Heart left ventricle (tissue), 16 donors: ENCODE measurements at regions of chr10 and their contacts with region 1.

Region 1: DNA sequence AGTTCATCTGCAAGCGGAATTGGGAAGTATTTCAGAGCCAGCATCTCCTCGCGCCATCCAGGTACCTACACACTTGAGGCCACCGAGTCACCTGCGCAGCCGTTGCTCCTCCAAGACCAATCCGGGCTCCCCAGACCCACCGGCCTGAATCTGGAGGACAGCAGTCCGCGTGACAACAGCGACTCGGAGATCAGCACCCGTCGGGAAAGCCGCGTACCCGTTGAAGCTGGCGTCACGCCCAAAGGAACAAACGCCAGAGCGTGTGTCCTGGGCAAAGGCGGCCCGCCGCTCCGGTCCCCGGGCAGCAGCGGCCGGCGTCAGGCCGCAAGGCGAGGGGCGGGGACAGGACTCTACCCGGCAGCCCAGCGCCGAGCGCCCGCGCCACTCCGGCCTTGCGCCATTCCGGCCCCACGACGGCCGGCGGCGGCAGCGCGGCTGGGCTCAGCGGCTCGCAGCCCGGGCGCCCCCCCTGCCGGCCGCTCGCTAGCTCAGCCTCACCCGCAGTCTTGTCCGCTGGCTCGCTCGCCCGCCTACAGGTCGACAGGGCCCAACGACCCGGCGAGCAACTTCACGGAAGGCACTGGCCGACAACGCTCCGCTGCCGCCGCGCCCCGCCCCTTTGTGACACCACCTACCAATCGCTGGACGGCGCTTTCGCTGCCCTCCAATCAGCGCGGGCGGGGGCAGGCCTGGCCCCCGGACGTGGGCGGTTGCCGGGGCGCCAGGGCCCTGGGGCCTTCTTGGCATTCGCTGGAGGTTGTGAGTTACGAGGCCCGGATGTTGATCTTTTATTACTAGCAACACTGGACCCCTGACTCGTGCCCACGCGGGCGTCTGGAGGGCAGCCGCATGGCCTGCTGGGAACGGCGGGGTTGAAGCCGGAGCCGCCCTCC is at the start of gene ZFAND4:
- DNase-seq: peak; percentile 98 to 99 (median 99)
- ATAC-seq: peak; percentile 98 to 99 (median 99)
- H3K4me3 ChIP-seq: peak within 1 kb of the TSS; percentile 67 to 87 (median 78)
- H3K27ac ChIP-seq: peak within 1 kb of the TSS; percentile 63 to 93 (median 88)
- H3K4me1 ChIP-seq: peaks cover 0 to 15% (median 4%) of the 10 kb centered on the region in 12 donors
- H3K27me3 ChIP-seq: no peaks in the 10 kb centered on the region
- CTCF ChIP-seq: peak; percentile 47 to 87 (median 76)
- POLR2A ChIP-seq: peak; percentile 28 to 77
- total RNA-seq, gene ZFAND4: 6.3 to 15.5 (median 10.5) TPM

Region 2: GRCh38 chr10:45000752-45001380 is 671.6 kb before region 1 on chr10 and contains the start of gene ZNF22:
- intact Hi-C with region 1: loop called in 2 of 10 experiments (anchors 5 to 10 kb)
- DNase-seq: peak; percentile 70 to 85 (median 82)
- ATAC-seq: peak; percentile 14 to 80 (median 63)
- H3K4me3 ChIP-seq: peak within 1 kb of the TSS; percentile 45 to 79 (median 66)
- H3K27ac ChIP-seq: peak within 1 kb of the TSS; percentile 93 to 99 (median 96)
- H3K4me1 ChIP-seq: peaks cover 8 to 73% (median 56%) of the 10 kb centered on the region in 12 donors
- H3K27me3 ChIP-seq: no peaks in the 10 kb centered on the region
- CTCF ChIP-seq: peak in 5 of 12 donors; percentile 10 to 40 (median 19)
- POLR2A ChIP-seq: peak in 1 of 2 donors; percentile 34
- total RNA-seq, gene ZNF22: 12.7 to 16.8 (median 14.6) TPM

Region 3: DNA sequence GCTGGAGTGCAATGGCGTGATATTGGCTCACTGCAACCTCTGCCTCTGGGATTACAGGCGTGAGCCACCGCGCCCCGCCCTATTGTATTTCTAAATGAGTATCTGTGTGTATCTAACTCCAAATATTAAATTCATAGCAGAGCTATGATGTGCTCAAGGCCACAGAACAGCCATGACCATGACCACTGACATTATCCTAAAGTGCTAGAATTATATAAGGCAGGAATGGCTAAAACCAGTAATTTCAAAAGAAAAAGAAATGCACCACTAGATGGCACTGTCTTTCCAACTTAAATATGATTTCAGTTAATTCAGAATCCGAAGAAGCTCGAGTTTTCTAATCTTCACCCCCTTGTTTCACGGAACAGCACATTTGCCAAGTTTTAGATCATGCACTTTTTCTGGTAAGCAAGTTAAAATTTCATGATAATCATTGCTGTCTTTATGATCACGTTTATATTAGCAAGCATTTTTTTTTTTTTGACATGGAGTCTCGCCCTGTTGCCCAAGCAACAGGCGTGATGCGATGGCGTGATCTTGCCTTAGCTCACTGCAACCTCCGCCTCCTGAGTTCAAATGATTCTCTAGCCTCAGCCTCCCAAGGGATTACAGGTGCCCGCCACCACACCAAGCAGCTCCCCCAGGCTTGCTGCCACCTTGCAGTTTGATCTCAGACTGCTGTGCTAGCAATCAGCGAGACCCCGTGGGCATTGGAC is 422.3 kb before region 1 on chr10:
- intact Hi-C with region 1: loop called in 1 of 10 experiments (anchors 5 kb)
- DNase-seq: peak in 1 of 5 donors; percentile 30
- ATAC-seq: peak in 2 of 4 donors; percentile 49 to 73
- H3K4me3 ChIP-seq: peak overlapping the region in 8 of 12 donors; percentile 11 to 47 (median 29)
- H3K27ac ChIP-seq: no peak overlapping the region
- H3K4me1 ChIP-seq: peaks cover 0 to 11% (median 0%) of the 10 kb centered on the region in 12 donors
- H3K27me3 ChIP-seq: peaks cover 0 to 8% (median 0%) of the 10 kb centered on the region in 9 donors
- CTCF ChIP-seq: peak; percentile 54 to 75 (median 68)
- POLR2A ChIP-seq: no peak

Region 4: GRCh38 chr10:45420453-45421192 is 251.8 kb before region 1 on chr10:
- intact Hi-C with region 1: loop called in 1 of 10 experiments (anchors 2 kb)
- DNase-seq: peak; percentile 78 to 91 (median 87)
- ATAC-seq: peak; percentile 11 to 61 (median 47)
- H3K4me3 ChIP-seq: peak overlapping the region in 6 of 12 donors; percentile 59 to 77 (median 72)
- H3K27ac ChIP-seq: peak overlapping the region; percentile 77 to 99 (median 92)
- H3K4me1 ChIP-seq: peaks cover 5 to 72% (median 24%) of the 10 kb centered on the region in 12 donors
- H3K27me3 ChIP-seq: no peaks in the 10 kb centered on the region
- CTCF ChIP-seq: no peak
- POLR2A ChIP-seq: no peak

Region 5: GRCh38 chr10:45464958-45465567 is 207.4 kb before region 1 on chr10:
- intact Hi-C with region 1: loop called (anchors 1 to 5 kb)
- DNase-seq: peak; percentile 72 to 86 (median 78)
- ATAC-seq: peak; percentile 87 to 93 (median 92)
- H3K4me3 ChIP-seq: no peak overlapping the region
- H3K27ac ChIP-seq: no peak overlapping the region
- H3K4me1 ChIP-seq: peaks cover 0 to 46% (median 7%) of the 10 kb centered on the region in 12 donors
- H3K27me3 ChIP-seq: no peaks in the 10 kb centered on the region
- CTCF ChIP-seq: peak; percentile 80 to 94 (median 88)
- POLR2A ChIP-seq: no peak

Region 6: GRCh38 chr10:45594276-45595106 is 77.9 kb before region 1 on chr10:
- intact Hi-C with region 1: loop called in 4 of 10 experiments (anchors 1 to 10 kb)
- DNase-seq: peak; percentile 93 to 97 (median 95)
- ATAC-seq: peak; percentile 97 to 99 (median 98)
- H3K4me3 ChIP-seq: peak overlapping the region; percentile 63 to 97 (median 84)
- H3K27ac ChIP-seq: peak overlapping the region; percentile 2 to 87 (median 67)
- H3K4me1 ChIP-seq: peaks cover 0 to 29% (median 21%) of the 10 kb centered on the region in 12 donors
- H3K27me3 ChIP-seq: peaks cover 0 to 3% (median 0%) of the 10 kb centered on the region in 9 donors
- CTCF ChIP-seq: peak in 2 of 12 donors; percentile 28 to 34
- POLR2A ChIP-seq: peak in 1 of 2 donors; percentile 71

Region 7: GRCh38 chr10:45627412-45628048 is 44.9 kb before region 1 on chr10:
- intact Hi-C with region 1: loop called in 1 of 10 experiments (anchors 2 kb)
- DNase-seq: peak in 4 of 5 donors; percentile 34 to 78 (median 64)
- ATAC-seq: peak; percentile 92 to 96 (median 94)
- H3K4me3 ChIP-seq: no peak overlapping the region
- H3K27ac ChIP-seq: peak overlapping the region; percentile 44 to 86 (median 72)
- H3K4me1 ChIP-seq: peaks cover 0 to 32% (median 11%) of the 10 kb centered on the region in 12 donors
- H3K27me3 ChIP-seq: no peaks in the 10 kb centered on the region
- CTCF ChIP-seq: no peak
- POLR2A ChIP-seq: no peak

Region 8: DNA sequence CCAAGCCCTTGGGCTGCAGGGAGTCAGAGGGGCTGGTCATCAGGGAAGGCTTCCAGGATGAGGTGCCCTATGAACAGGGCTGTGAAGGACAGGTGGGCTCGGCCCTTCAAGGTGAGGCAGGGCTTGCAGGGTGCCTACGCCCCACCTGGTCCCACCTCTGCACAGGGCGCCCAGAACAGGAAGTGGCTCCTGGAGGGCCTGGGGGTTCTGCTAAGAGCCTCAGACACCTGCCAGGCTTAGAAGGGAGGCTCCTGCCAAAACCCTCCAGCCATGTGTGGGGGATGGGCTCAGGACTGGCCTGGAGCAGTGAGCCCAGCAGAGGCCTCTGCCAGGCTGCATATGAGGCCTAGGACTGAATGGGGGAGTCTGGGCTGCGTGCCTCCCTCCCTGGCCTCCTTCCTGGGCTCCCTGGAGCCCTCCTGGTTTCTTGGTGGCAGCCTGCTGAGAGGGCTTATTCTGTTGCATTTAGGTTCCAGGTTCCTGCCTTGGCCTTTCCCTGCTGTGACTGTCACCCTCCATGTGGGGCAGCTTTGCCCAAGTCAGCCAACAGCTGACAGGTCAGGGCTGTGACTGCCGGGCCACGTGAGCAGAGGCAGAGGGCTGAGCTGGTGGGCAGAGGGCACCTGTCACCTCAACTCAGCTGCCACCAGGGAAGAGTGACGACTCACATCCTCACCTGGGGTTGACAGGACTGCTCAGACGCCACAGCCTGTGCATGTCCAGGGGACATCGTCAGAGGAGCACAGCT is 418.8 kb after region 1 on chr10:
- intact Hi-C with region 1: no loop called
- DNase-seq: no peak
- ATAC-seq: peak in 2 of 4 donors; percentile 10 to 13
- H3K4me3 ChIP-seq: no peak overlapping the region
- H3K27ac ChIP-seq: no peak overlapping the region
- H3K4me1 ChIP-seq: peaks cover 0 to 11% (median 0%) of the 10 kb centered on the region in 12 donors
- H3K27me3 ChIP-seq: no peaks in the 10 kb centered on the region
- CTCF ChIP-seq: no peak
- POLR2A ChIP-seq: no peak

Region 9: GRCh38 chr10:46239247-46239646 is 566.8 kb after region 1 on chr10:
- intact Hi-C with region 1: no loop called
- DNase-seq: no peak
- ATAC-seq: no peak
- H3K4me3 ChIP-seq: no peak overlapping the region
- H3K27ac ChIP-seq: no peak overlapping the region
- H3K4me1 ChIP-seq: no peaks in the 10 kb centered on the region
- H3K27me3 ChIP-seq: no peaks in the 10 kb centered on the region
- CTCF ChIP-seq: no peak
- POLR2A ChIP-seq: no peak